Activated CD4-positive, alpha-beta memory T cell treated with anti-CD3 and anti-CD28 coated beads, Interleukin-2, amount 10 ng/mL, durations not matched to agents 7 days and 5 days (primary cell): ENCODE measurements at regions of chrX and their contacts with region 1.

Region 1: DNA sequence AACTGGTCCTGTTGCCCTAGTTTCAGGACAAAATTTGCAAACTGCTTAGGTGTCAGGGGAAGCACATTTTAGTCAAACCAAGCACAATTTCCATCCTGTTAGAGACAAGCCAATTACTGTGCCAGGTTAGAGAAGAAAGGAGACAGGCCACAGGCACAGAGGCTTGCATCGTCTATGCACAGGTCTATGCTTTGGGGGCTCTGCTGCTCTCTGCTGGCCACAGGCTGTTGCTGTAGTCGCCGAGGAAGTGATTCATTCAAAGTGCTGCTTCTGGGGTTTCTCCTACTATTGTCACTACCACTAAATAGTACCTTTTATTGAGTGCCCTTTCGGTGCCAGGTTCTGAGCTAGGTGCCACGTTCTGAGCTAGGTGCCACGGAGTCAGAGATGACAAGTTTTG is 45.5 kb downstream of the VGLL1 start:
- DNase-seq: peak; percentile 80
- H3K4me3 Mint-ChIP-seq: peak overlapping the region; percentile 31
- H3K27ac Mint-ChIP-seq: peak overlapping the region; percentile 76
- H3K4me1 Mint-ChIP-seq: peaks cover 39% of the 10 kb centered on the region
- H3K27me3 Mint-ChIP-seq: no peaks in the 10 kb centered on the region

Region 2: GRCh38 chrX:136496770-136497598 is 80.6 kb before region 1 on chrX and contains the start of gene HTATSF1:
- CTCF ChIA-PET with region 1: interaction called, 12 read pairs
- POLR2A ChIA-PET with region 1: interaction called, 23 read pairs
- DNase-seq: peak; percentile 90
- H3K4me3 Mint-ChIP-seq: peak within 1 kb of the TSS; percentile 88
- H3K27ac Mint-ChIP-seq: peak within 1 kb of the TSS; percentile 97
- H3K4me1 Mint-ChIP-seq: peaks cover 36% of the 10 kb centered on the region
- H3K27me3 Mint-ChIP-seq: peaks cover 8% of the 10 kb centered on the region
- total RNA-seq, gene HTATSF1: 63.7 to 64.1 TPM

Region 3: GRCh38 chrX:136529763-136530162 is 47.8 kb before region 1 on chrX:
- CTCF ChIA-PET with region 1: no interaction called
- POLR2A ChIA-PET with region 1: no interaction called
- DNase-seq: no peak
- H3K4me3 Mint-ChIP-seq: no peak overlapping the region
- H3K27ac Mint-ChIP-seq: no peak overlapping the region
- H3K4me1 Mint-ChIP-seq: peaks cover 2% of the 10 kb centered on the region
- H3K27me3 Mint-ChIP-seq: peaks cover 3% of the 10 kb centered on the region

Region 4: GRCh38 chrX:136588041-136588788 is 10.7 kb after region 1 on chrX:
- CTCF ChIA-PET with region 1: interaction called, 13 read pairs
- POLR2A ChIA-PET with region 1: interaction called, 5 read pairs
- DNase-seq: no peak
- H3K4me3 Mint-ChIP-seq: peak overlapping the region; percentile 57
- H3K27ac Mint-ChIP-seq: peak overlapping the region; percentile 97
- H3K4me1 Mint-ChIP-seq: peaks cover 66% of the 10 kb centered on the region
- H3K27me3 Mint-ChIP-seq: no peaks in the 10 kb centered on the region

Region 5: DNA sequence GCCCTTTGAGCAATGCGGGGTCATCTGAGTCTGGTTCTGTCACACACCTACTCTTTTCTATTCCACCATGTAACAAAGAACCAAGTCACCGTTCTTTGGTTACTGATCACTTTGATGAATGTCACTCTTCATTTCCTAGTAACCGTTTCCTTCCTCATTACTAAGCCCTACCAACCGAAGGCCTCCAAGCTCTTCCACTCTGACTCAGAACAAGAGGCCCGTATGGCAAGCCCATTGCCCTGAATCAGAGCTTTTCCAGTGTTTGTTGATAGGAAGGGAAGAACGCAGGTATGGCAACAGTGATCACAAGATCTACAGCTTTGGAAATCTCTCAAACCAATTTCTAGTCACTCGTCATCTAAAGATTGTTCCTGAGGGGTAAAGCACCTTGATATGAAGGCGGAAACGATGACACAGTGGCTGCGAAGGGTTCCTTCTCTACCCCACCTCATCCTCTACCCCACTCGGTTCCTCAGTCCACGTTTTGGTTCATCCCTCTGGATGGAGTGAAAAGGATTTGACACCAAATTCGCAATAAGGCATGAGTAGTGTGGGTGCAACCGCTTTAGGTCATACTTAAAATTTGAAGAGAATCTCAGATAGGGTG is 42.5 kb after region 1 on chrX:
- CTCF ChIA-PET with region 1: no interaction called
- POLR2A ChIA-PET with region 1: no interaction called
- DNase-seq: peak; percentile 59
- H3K4me3 Mint-ChIP-seq: peak overlapping the region; percentile 26
- H3K27ac Mint-ChIP-seq: peak overlapping the region; percentile 84
- H3K4me1 Mint-ChIP-seq: peaks cover 89% of the 10 kb centered on the region
- H3K27me3 Mint-ChIP-seq: no peaks in the 10 kb centered on the region

Region 6: DNA sequence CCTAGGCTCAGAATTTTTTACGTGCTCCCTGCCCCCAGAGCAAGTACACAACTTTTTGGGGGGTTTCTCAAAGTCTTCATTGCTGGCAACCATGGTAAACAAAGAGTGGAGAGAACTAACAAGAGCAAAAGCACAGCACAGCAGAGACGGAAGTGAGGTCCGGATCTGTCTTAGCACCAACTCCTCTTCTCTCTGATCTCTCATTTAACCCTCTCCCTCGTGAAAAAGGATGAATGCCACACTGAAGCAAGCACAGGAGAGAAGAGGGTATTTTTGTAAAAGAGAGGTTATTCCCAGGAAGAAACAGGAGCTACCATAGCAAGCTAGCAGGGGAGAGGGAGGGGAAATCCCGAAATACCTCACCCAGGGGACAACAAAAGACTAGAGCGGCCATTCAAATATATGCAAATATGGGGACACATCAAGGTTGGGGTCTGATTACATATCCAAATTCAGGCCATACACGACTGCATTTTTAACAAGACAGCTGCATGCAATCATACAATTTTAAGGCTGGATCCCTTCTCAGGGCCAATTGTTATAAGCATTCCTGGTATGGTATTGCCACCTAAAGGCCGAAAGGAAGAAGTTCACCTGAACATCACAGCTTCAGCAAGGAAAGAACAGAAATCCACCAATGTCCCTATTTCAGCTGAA is 117.0 kb after region 1 on chrX:
- CTCF ChIA-PET with region 1: interaction called, 21 read pairs
- POLR2A ChIA-PET with region 1: interaction called, 3 read pairs
- DNase-seq: peak; percentile 28
- H3K4me3 Mint-ChIP-seq: peak overlapping the region; percentile 71
- H3K27ac Mint-ChIP-seq: peak overlapping the region; percentile 98
- H3K4me1 Mint-ChIP-seq: peaks cover 82% of the 10 kb centered on the region
- H3K27me3 Mint-ChIP-seq: no peaks in the 10 kb centered on the region